Natural killer cell (primary cell): ENCODE measurements at regions of chr11 and their contacts with region 1.

Region 1: DNA sequence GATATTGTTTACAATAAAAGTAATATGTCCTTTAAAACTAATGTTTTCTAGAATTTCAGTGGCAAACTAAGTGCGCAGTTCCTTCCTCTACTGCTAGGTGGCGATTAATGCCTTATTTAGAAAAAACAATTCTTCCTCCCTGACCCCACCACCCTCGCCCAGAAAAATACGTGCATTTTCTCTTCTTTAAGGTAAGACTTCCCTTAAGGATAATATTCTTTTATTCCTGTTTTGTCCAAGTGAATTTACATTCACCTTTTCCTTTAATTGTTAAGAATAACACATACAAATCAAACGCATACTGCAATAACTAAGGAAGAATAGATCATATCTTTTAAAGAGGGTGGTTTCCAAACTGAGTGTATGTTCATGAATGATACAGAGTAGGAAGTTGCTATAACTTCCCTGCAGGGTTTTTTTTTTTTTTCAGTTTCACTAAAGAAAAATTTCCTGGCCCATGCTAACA is 17.0 kb upstream of the PSMA1 start:
- DNase-seq: peak in 1 of 2 donors; percentile 76
- ATAC-seq: peak; percentile 84 to 91 (median 86)
- H3K4me3 ChIP-seq: no peak overlapping the region
- H3K4me3 Mint-ChIP-seq: no peak overlapping the region
- H3K27ac ChIP-seq: no peak overlapping the region
- H3K27ac Mint-ChIP-seq: peak overlapping the region in 1 of 2 donors; percentile 76
- H3K4me1 ChIP-seq: no peaks in the 10 kb centered on the region
- H3K4me1 Mint-ChIP-seq: no peaks in the 10 kb centered on the region
- H3K27me3 ChIP-seq: no peaks in the 10 kb centered on the region
- H3K27me3 Mint-ChIP-seq: no peaks in the 10 kb centered on the region
- CTCF ChIP-seq: peak; percentile 91

Region 2: GRCh38 chr11:14587258-14587657 is 50.1 kb after region 1 on chr11:
- intact Hi-C with region 1: no loop called
- DNase-seq: no peak
- ATAC-seq: no peak
- H3K4me3 ChIP-seq: no peak overlapping the region
- H3K4me3 Mint-ChIP-seq: no peak overlapping the region
- H3K27ac ChIP-seq: no peak overlapping the region
- H3K27ac Mint-ChIP-seq: no peak overlapping the region
- H3K4me1 ChIP-seq: no peaks in the 10 kb centered on the region
- H3K4me1 Mint-ChIP-seq: peaks cover 8 to 21% of the 10 kb centered on the region in 2 donors
- H3K27me3 ChIP-seq: no peaks in the 10 kb centered on the region
- H3K27me3 Mint-ChIP-seq: peaks cover 0 to 2% of the 10 kb centered on the region in 2 donors
- CTCF ChIP-seq: no peak

Region 3: DNA sequence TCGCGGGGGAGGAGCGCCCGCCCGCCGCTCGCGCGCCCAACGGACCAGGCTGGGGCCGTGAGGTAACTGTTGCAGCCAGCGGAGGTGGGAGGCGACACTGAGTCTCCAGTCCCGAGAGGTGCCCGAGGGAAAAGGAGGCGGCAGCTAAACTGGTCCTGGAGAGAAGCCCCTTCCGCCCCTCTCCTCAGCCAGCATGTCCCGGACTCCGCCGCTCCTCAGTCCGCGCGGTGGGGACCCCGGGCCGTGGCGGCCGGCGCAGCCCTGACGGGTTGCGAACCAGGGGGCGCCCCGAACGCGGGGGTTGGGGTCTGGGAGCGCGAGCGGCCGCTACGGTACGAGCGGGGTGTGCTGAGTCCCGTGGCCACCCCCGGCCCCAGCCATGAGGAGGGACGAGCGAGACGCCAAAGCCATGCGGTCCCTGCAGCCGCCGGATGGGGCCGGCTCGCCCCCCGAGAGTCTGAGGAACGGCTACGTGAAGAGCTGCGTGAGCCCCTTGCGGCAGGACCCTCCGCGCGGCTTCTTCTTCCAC is 106.6 kb after region 1 on chr11 and contains the start of gene PDE3B:
- intact Hi-C with region 1: loop called (anchors 1 kb)
- DNase-seq: peak; percentile 66 to 83
- ATAC-seq: peak; percentile 79 to 88 (median 80)
- H3K4me3 ChIP-seq: peak within 1 kb of the TSS; percentile 87
- H3K4me3 Mint-ChIP-seq: peak within 1 kb of the TSS; percentile 81
- H3K27ac ChIP-seq: peak within 1 kb of the TSS; percentile 70
- H3K27ac Mint-ChIP-seq: peak within 1 kb of the TSS in 1 of 2 donors; percentile 86
- H3K4me1 ChIP-seq: peaks cover 12% of the 10 kb centered on the region
- H3K4me1 Mint-ChIP-seq: peaks cover 21 to 31% of the 10 kb centered on the region in 2 donors
- H3K27me3 ChIP-seq: peaks cover 35% of the 10 kb centered on the region
- H3K27me3 Mint-ChIP-seq: peaks cover 11 to 38% of the 10 kb centered on the region in 2 donors
- CTCF ChIP-seq: no peak
- total RNA-seq, gene PDE3B: 18.2 to 42.3 (median 34.5) TPM

Region 4: DNA sequence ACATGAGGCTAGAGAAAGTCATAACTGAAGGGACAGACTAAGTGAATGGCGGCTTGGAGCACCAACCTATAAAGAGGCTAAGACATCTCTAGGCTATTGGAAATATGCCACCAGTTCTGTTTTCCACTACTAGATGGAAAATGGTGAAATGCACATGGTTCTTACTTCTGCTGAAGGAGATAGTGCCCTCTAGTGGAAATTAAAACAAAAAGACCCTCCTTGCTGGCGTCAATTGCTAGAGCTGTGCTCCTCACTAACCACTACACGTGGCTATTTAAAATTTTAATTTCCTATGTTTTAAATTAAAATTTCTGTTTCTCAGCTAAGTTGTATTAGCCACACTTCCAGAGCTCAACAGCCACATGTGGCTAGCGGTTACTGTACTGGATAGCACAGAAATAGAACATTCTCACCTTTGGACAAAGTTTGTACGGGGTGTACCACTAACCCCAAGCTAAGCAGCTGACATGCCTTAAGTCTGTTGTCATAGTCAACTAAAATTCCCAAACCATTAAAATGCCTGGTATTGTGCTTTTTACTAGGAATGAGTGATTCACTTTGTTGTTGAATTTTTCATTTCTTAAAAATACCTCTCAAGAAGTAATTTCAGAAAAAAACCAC is 469.1 kb after region 1 on chr11:
- intact Hi-C with region 1: loop called (anchors 5 kb)
- DNase-seq: peak in 1 of 2 donors; percentile 60
- ATAC-seq: peak; percentile 54 to 64 (median 59)
- H3K4me3 ChIP-seq: no peak overlapping the region
- H3K4me3 Mint-ChIP-seq: no peak overlapping the region
- H3K27ac ChIP-seq: no peak overlapping the region
- H3K27ac Mint-ChIP-seq: no peak overlapping the region
- H3K4me1 ChIP-seq: no peaks in the 10 kb centered on the region
- H3K4me1 Mint-ChIP-seq: no peaks in the 10 kb centered on the region
- H3K27me3 ChIP-seq: peaks cover 29% of the 10 kb centered on the region
- H3K27me3 Mint-ChIP-seq: peaks cover 26 to 59% of the 10 kb centered on the region in 2 donors
- CTCF ChIP-seq: peak; percentile 47

Region 5: DNA sequence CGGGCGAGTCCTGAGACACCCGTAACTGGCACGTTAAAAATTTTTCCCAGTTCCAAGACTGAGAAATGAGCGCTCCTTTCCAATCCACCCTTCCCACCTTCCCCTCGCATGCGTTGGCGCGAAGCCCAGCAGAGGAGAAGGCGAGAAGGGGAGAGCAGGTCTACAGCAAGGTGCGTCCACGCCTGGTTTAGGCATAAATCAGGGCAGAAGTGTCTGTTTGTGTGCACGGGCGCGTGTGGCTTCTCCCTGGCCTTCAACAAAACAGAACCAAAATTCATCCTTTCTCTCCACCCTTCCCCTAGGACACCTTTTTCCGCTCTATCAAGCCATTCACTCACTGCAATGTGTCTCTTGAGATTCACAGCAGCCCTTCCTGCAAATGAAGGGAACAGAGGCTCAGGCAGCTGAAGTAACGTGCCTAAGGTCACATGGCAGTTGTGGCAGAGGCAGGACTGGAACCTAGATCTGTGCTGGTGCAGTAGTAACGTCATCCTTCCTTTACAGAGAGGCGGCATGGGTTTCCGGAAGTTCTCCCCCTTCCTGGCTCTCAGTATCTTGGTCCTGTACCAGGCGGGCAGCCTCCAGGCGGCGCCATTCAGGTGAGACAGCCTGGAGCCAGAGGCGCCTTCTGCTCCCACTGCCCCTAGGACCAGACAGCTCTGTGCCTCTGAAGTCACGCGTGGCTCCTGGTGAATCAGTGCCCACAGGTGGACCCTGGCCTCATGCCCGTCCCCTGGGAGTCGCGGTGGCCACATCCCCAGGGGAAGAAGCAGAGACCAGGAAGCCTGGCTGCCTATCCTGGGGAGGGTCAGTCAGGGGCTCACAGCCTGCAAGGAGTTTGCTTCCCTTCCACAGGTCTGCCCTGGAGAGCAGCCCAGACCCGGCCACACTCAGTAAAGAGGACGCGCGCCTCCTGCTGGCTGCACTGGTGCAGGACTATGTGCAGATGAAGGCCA is 537.3 kb after region 1 on chr11:
- intact Hi-C with region 1: loop called (anchors 5 kb)
- DNase-seq: peak; percentile 71 to 84
- ATAC-seq: peak; percentile 81 to 88 (median 88)
- H3K4me3 ChIP-seq: peak overlapping the region; percentile 9
- H3K4me3 Mint-ChIP-seq: peak overlapping the region; percentile 60
- H3K27ac ChIP-seq: no peak overlapping the region
- H3K27ac Mint-ChIP-seq: no peak overlapping the region
- H3K4me1 ChIP-seq: peaks cover 20% of the 10 kb centered on the region
- H3K4me1 Mint-ChIP-seq: peaks cover 18 to 19% of the 10 kb centered on the region in 2 donors
- H3K27me3 ChIP-seq: peaks cover 17% of the 10 kb centered on the region
- H3K27me3 Mint-ChIP-seq: peaks cover 48 to 75% of the 10 kb centered on the region in 2 donors
- CTCF ChIP-seq: peak; percentile 71

Region 6: GRCh38 chr11:15615398-15616096 is 1078.4 kb after region 1 on chr11:
- intact Hi-C with region 1: no loop called
- DNase-seq: no peak
- ATAC-seq: no peak
- H3K4me3 ChIP-seq: no peak overlapping the region
- H3K4me3 Mint-ChIP-seq: no peak overlapping the region
- H3K27ac ChIP-seq: no peak overlapping the region
- H3K27ac Mint-ChIP-seq: no peak overlapping the region
- H3K4me1 ChIP-seq: no peaks in the 10 kb centered on the region
- H3K4me1 Mint-ChIP-seq: no peaks in the 10 kb centered on the region
- H3K27me3 ChIP-seq: no peaks in the 10 kb centered on the region
- H3K27me3 Mint-ChIP-seq: no peaks in the 10 kb centered on the region
- CTCF ChIP-seq: no peak